Activated naive CD8-positive, alpha-beta T cell treated with anti-CD3 and anti-CD28 coated beads, Interleukin-2, amount 10 ng/mL, durations not matched to agents 7 days and 5 days (primary cell): ENCODE measurements at regions of chr5 and their contacts with region 1.

Region 1: GRCh38 chr5:156913719-156914370 is 49.2 kb downstream of the TIMD4 start:
- DNase-seq: no peak
- ATAC-seq: peak; percentile 95
- H3K4me3 Mint-ChIP-seq: peak overlapping the region; percentile 43
- H3K27ac Mint-ChIP-seq: peak overlapping the region; percentile 77
- H3K4me1 Mint-ChIP-seq: peaks cover 38% of the 10 kb centered on the region
- H3K27me3 Mint-ChIP-seq: no peaks in the 10 kb centered on the region

Region 2: GRCh38 chr5:156783092-156783491 is 130.8 kb before region 1 on chr5:
- POLR2A ChIA-PET with region 1: no interaction called
- DNase-seq: no peak
- ATAC-seq: no peak
- H3K4me3 Mint-ChIP-seq: no peak overlapping the region
- H3K27ac Mint-ChIP-seq: no peak overlapping the region
- H3K4me1 Mint-ChIP-seq: peaks cover 8% of the 10 kb centered on the region
- H3K27me3 Mint-ChIP-seq: no peaks in the 10 kb centered on the region

Region 3: GRCh38 chr5:156850206-156850751 is 63.6 kb before region 1 on chr5 and contains the start of gene PPP1R2B:
- POLR2A ChIA-PET with region 1: interaction called, 10 read pairs
- DNase-seq: no peak
- ATAC-seq: no peak
- H3K4me3 Mint-ChIP-seq: no peak within 1 kb of the TSS
- H3K27ac Mint-ChIP-seq: no peak within 1 kb of the TSS
- H3K4me1 Mint-ChIP-seq: peaks cover 7% of the 10 kb centered on the region
- H3K27me3 Mint-ChIP-seq: peaks cover 32% of the 10 kb centered on the region
- total RNA-seq, gene PPP1R2B: not detected

Region 4: DNA sequence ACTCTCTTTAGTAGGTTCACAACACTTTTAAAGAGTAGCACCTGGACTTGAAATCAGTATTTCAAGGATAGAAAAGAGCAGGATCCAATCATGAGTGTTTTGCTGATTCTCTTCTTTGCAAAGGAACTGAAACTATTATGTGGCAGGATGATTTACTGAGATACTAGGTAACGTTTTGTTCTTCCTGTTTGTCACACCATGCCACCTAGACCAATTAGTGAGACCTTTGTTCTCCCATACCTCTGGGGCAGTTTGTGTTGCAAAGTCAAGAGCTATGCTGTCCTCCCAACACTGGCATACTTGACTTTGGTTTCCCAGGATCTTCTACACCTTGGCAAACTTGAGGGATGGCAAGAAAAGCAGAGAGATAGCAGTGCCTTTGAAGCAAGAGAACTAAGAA is 20.3 kb before region 1 on chr5:
- POLR2A ChIA-PET with region 1: interaction called, 10 read pairs
- DNase-seq: no peak
- ATAC-seq: peak; percentile 61
- H3K4me3 Mint-ChIP-seq: peak overlapping the region; percentile 36
- H3K27ac Mint-ChIP-seq: peak overlapping the region; percentile 87
- H3K4me1 Mint-ChIP-seq: peaks cover 31% of the 10 kb centered on the region
- H3K27me3 Mint-ChIP-seq: no peaks in the 10 kb centered on the region

Region 5: GRCh38 chr5:156929366-156929948 is 15.6 kb after region 1 on chr5:
- POLR2A ChIA-PET with region 1: interaction called, 14 read pairs
- DNase-seq: no peak
- ATAC-seq: peak; percentile 71
- H3K4me3 Mint-ChIP-seq: peak overlapping the region; percentile 14
- H3K27ac Mint-ChIP-seq: peak overlapping the region; percentile 86
- H3K4me1 Mint-ChIP-seq: peaks cover 78% of the 10 kb centered on the region
- H3K27me3 Mint-ChIP-seq: no peaks in the 10 kb centered on the region